ENCODE measurements at regions of chr16 and their contacts with region 1.

Region 1: DNA sequence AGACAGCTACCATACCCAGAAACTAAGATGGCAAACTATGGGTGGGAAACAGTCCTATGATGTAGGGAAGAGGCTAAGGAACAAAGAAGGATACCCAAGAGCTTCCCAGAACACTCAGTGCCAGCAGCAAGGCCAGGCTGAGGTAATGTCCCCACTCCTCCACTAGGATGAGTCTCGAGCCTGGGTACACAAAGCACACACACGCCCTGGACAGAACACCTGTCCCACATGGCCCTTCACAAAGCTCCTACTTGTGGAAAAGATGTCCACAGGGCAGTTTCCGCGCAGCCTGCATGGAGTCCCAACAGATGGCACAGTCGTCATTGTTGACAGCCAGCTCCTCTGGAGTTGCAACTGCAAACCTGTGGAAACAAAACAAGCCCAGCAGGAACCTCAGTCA is 23.9 kb downstream of the AMFR start:
- DNase-seq: no peak
- H3K4me3 ChIP-seq: no peak overlapping the region
- H3K27ac ChIP-seq: no peak overlapping the region
- H3K4me1 ChIP-seq: no peaks in the 10 kb centered on the region
- H3K27me3 ChIP-seq: no peaks in the 10 kb centered on the region
- CTCF ChIP-seq: no peak
- EP300 ChIP-seq: no peak
- POLR2A ChIP-seq: no peak

Region 2: DNA sequence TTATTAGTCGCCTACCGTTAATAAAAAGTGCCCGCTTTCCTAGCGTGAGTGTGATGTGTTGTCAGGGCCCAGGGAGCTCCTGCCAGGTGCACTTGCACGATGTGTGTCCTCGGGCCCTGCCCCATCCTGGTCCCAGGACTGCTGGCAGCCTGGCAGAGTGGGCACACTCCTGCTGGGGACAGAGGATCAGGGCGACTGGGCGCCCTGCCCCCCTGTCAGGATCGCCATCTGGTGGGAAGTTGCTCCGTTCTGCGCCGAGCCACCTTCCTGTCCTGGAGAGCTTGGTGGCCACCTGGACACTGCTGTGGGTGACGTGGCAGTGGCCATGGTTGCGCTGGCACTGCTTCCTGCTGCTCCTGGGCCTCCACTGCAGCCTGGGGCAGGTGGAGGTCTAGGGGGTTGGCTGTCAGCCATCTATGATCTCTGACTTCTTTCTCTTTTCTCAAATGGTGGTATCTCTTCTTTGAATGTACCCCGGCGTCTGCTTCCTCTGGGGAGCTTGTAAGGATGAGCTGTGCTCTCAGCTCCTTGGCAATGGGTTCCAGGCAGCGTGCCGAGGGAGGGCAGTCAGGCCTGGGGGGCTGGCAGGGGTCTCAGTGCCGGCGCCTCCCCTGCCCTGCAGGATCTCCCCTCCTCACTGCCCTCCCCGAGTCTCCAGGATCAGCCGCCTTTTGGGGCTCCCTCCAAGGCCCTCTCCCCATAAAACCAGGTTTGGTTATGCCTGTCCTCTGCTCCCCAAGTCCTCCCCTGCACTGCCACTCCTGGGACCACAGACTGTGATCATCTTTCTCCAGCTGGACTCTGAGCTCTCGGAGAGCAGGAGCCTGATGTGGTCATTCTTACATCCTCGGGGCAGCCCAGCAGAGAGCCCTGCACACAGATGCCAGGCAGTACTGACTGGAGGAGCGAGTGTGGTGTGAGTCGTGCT is 53.1 kb before region 1 on chr16:
- intact Hi-C with region 1: loop called in 1 of 4 experiments (anchors 2 kb)
- DNase-seq: no peak
- H3K4me3 ChIP-seq: no peak overlapping the region
- H3K27ac ChIP-seq: no peak overlapping the region
- H3K4me1 ChIP-seq: no peaks in the 10 kb centered on the region
- H3K27me3 ChIP-seq: no peaks in the 10 kb centered on the region
- CTCF ChIP-seq: no peak
- EP300 ChIP-seq: no peak
- POLR2A ChIP-seq: no peak

Region 3: GRCh38 chr16:56450986-56451752 is 49.7 kb after region 1 on chr16 and contains the starts of genes NUDT21 and OGFOD1:
- intact Hi-C with region 1: no loop called
- DNase-seq: peak; percentile 90 to 93 (median 91)
- H3K4me3 ChIP-seq: peak within 1 kb of the TSS; percentile 62
- H3K27ac ChIP-seq: peak within 1 kb of the TSS in 1 of 2 donors; percentile 66
- H3K4me1 ChIP-seq: peaks cover 14% of the 10 kb centered on the region
- H3K27me3 ChIP-seq: no peaks in the 10 kb centered on the region
- CTCF ChIP-seq: no peak
- EP300 ChIP-seq: no peak
- POLR2A ChIP-seq: peak; percentile 56
- total RNA-seq, gene NUDT21: 46.0 to 163 (median 130) TPM
- total RNA-seq, gene OGFOD1: 8.1 to 45.2 (median 28.9) TPM